Mucosa of descending colon (tissue), 3 donors: ENCODE measurements at regions of chr9 and their contacts with region 1.

Region 1: GRCh38 chr9:26706223-26706622 is 186.4 kb downstream of the CAAP1 start:
- DNase-seq: no peak
- ATAC-seq: no peak
- H3K4me3 ChIP-seq: no peak overlapping the region
- H3K4me1 ChIP-seq: no peaks in the 10 kb centered on the region
- CTCF ChIP-seq: no peak

Region 2: DNA sequence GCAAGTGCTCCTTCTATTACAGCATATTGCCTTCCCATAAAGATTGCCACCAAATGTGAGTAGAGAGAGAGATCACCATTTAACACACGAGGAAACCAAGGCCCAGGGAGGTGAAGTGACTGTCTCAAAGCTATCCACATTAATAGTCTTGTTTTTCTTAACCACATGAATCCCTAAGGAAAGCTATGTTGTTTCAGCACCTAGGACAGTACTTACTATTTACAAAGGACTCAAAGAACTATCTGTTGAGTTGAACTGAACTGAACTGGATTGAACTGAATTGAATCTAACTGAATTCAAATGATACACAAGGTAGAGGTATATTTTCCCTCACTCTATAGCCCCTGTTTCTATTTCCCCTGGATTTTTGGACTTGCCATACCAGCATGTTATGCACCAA is 244.0 kb before region 1 on chr9:
- intact Hi-C with region 1: no loop called
- DNase-seq: no peak
- ATAC-seq: no peak
- H3K4me3 ChIP-seq: no peak overlapping the region
- H3K4me1 ChIP-seq: no peaks in the 10 kb centered on the region
- CTCF ChIP-seq: no peak

Region 3: GRCh38 chr9:26656003-26656870 is 50.0 kb before region 1 on chr9:
- intact Hi-C with region 1: loop called in 1 of 2 experiments (anchors 10 kb)
- DNase-seq: peak in 1 of 3 donors; percentile 3
- ATAC-seq: no peak
- H3K4me3 ChIP-seq: no peak overlapping the region
- H3K4me1 ChIP-seq: no peaks in the 10 kb centered on the region
- CTCF ChIP-seq: no peak

Region 4: DNA sequence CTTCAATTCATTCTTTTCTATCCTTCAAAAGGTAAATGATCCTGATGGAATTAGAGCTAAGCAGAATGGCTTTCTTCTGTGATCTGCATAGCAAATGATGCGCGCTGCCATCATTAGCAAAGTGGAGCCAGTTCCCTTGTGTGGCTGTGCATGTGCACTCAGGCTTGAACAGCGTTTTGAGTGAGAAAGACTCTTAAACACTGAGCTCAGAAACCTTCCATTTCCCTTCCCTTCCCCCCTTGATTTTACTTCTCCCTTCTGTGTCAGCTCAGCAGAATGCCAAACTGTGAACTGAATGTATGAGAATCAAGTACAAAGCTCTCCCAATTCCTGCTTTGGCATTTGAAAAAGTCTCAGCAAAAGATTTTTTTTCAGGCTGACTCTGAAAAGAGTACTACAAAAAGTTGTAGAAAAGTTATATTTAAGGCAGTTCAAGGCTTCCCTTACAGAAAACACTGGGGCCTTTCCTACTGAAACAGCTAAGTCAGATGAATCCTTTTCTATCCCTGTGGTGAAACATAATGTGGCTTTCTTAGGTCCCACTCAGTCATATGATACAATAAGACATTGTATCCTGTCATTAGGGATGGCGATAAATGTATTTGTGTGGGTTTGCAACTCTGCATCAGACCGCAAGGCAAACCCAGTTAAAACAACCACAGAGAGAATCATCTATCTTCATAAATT is 36.4 kb before region 1 on chr9:
- intact Hi-C with region 1: no loop called
- DNase-seq: no peak
- ATAC-seq: no peak
- H3K4me3 ChIP-seq: no peak overlapping the region
- H3K4me1 ChIP-seq: no peaks in the 10 kb centered on the region
- CTCF ChIP-seq: no peak